Ovary (tissue), 10 donors: ENCODE measurements at regions of chr12 and their contacts with region 1.

Region 1: GRCh38 chr12:68866950-68867349 is 59.0 kb downstream of the MDM2 start:
- DNase-seq: no peak
- H3K4me3 ChIP-seq: no peak overlapping the region
- H3K27ac ChIP-seq: no peak overlapping the region
- H3K4me1 ChIP-seq: peaks cover 1% of the 10 kb centered on the region
- H3K27me3 ChIP-seq: no peaks in the 10 kb centered on the region
- CTCF ChIP-seq: no peak
- EP300 ChIP-seq: no peak
- POLR2A ChIP-seq: no peak

Region 2: DNA sequence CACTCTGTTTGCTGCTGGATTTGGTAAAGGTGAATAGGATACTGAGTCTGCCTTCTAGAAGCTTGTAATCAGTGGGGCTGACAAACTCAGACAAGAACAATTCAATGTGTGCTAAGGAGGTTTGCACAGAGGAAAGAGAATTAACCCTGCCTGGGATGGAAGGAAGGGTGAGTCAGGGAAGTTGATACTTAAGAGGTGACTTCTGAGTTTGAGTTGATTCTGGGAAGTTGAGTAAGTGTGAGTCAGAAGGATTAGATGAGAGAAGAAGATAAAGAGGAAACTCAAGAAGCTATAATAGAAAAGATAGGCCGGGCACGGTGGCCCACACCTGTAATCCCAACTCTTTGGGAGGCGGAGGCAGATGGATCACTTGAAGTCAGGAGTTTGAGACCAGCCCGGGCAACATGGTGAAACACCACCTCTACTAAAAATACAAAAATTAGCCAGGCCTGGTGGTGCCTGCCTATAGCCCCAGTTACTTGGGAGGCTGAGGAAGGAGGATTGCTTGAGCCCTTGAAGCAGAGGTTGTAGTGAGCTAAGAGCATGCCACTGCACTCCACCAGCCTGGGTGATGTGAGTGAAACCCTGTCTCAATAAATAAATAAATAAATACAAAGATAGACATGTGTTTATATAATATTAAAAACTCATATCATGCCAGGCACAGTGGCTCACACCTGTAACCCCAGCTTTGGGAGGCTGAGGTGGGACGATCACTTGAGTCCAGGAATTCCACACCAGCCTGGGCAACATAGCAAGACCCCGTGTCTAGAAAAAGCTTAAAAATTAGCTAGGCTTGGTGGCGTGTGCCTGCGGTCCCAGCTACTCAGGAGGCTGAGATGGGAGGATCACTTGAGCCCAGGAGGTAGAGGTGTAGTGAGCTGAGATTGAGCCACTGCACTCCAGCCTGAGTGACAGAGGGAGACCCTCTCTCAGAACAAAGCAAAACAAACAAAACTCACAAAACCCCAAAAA is 192.8 kb after region 1 on chr12:
- intact Hi-C with region 1: loop called in 2 of 4 experiments (anchors 10 kb)
- DNase-seq: no peak
- H3K4me3 ChIP-seq: no peak overlapping the region
- H3K27ac ChIP-seq: no peak overlapping the region
- H3K4me1 ChIP-seq: peaks cover 5% of the 10 kb centered on the region
- H3K27me3 ChIP-seq: no peaks in the 10 kb centered on the region
- CTCF ChIP-seq: no peak
- EP300 ChIP-seq: no peak
- POLR2A ChIP-seq: no peak

Region 3: DNA sequence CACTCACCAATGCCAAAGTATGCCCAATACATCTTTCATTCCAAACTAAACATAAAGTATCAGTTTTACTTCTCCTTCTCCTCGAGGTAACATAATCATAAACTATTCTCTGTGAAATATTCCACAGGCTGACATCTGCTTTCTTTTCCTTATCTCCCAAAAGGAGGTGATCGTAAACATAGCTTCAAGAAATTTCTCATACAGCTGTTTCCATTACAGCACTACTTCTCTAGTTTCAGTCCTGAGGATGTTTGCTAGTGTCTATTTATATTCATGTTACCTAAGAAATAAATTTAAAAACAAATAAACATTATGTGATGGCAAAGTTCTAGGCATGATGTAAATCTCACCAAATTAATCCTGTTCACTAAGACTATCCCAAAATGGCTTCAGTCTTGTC is 282.3 kb after region 1 on chr12:
- intact Hi-C with region 1: loop called in 2 of 4 experiments (anchors 5 to 10 kb)
- DNase-seq: no peak
- H3K4me3 ChIP-seq: no peak overlapping the region
- H3K27ac ChIP-seq: no peak overlapping the region
- H3K4me1 ChIP-seq: no peaks in the 10 kb centered on the region
- H3K27me3 ChIP-seq: no peaks in the 10 kb centered on the region
- CTCF ChIP-seq: no peak
- EP300 ChIP-seq: no peak
- POLR2A ChIP-seq: no peak

Region 4: DNA sequence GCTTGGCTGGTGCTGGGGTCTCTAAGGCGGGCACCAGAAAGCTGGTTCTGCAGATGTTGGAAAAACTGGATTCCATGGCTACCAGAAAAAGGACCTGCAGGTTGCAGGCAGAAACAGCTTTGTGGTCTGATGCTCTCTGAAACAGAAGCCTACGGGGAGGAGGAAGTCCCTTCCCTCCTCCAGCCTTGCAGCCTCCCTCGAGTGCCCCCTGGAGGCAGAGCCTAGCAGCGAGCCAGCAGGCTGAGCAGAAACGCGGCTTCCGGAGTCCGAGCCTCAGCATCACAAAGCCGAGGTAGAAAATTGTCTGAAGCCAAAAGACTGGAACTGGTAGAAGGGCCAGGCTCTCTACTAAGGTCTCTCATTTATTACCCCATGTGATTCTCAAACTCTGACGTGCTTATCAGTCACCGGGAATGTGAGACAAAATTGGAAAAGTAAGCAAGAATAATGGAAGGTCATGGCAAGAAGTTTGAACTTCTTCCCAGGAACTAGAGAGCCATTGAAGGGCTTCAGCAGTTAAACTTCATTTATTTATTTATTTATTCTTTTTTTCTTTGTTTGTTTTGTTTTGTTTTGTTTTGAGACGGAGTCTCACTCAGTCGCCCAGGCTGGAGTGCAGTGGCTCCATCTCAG is 290.2 kb after region 1 on chr12:
- intact Hi-C with region 1: loop called in 1 of 4 experiments (anchors 10 kb)
- DNase-seq: peak; percentile 89 to 93 (median 90)
- H3K4me3 ChIP-seq: no peak overlapping the region
- H3K27ac ChIP-seq: peak overlapping the region in 1 of 2 donors; percentile 16
- H3K4me1 ChIP-seq: peaks cover 1% of the 10 kb centered on the region
- H3K27me3 ChIP-seq: no peaks in the 10 kb centered on the region
- CTCF ChIP-seq: peak; percentile 75 to 82 (median 79)
- EP300 ChIP-seq: no peak
- POLR2A ChIP-seq: no peak